ENCODE measurements at regions of chr13 and their contacts with region 1.

Region 1: GRCh38 chr13:30132623-30133553 is 174.5 kb downstream of the KATNAL1 start:
- DNase-seq: peak; percentile 96
- ATAC-seq: peak; percentile 94 to 98 (median 96)
- H3K4me3 ChIP-seq: no peak overlapping the region
- H3K27ac ChIP-seq: peak overlapping the region in 1 of 10 donors; percentile 15
- H3K4me1 ChIP-seq: peaks cover 0 to 20% (median 4%) of the 10 kb centered on the region in 9 donors
- H3K27me3 ChIP-seq: no peaks in the 10 kb centered on the region
- CTCF ChIP-seq: peak; percentile 83 to 97 (median 95)

Region 2: DNA sequence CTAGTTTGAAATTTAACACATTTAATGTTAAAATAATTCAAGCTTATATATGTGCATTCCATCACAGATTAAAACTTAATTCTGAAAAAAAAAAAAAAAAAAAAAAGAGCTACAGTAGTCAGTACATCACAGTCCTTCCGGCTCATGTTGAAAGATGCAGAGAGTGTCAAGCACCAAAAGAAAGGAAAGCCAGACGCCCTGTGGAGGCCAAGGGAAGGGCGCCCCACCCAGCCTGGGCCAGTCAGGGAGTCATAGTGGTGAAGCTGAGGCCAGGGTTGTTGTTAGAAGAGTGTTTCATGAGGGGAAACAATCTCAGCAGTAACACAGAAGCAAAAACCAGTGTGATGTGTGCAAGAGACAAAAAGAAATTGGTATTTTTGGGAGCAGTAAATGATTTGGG is 937.4 kb before region 1 on chr13:
- intact Hi-C with region 1: no loop called
- DNase-seq: no peak
- ATAC-seq: no peak
- H3K4me3 ChIP-seq: no peak overlapping the region
- H3K27ac ChIP-seq: no peak overlapping the region
- H3K4me1 ChIP-seq: no peaks in the 10 kb centered on the region
- H3K27me3 ChIP-seq: no peaks in the 10 kb centered on the region
- CTCF ChIP-seq: peak in 1 of 9 donors; percentile 12

Region 3: DNA sequence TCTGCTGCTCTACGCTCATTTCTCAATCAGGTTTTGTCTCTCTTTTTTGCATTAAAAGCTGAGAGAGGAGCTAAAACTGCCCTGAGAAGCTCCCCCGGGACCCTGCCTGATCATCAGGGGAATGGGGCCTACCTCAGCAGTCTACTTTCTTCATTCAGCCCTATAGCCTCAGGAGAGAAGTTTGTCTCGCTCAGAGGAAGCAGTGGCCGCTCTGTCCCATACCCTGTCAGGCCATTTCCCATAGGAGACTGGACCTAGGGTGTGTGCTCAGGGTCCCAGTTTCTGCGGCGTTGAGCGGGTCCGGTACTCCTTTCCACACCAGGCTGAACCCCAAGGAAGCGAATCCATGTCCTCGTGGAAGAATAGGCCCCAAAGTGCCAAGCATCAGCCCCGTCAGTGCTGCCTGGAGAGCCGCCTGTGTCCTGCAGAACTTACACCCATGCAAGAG is 311.1 kb after region 1 on chr13:
- intact Hi-C with region 1: loop called in 3 of 10 experiments (anchors 5 to 10 kb)
- DNase-seq: no peak
- ATAC-seq: no peak
- H3K4me3 ChIP-seq: no peak overlapping the region
- H3K27ac ChIP-seq: no peak overlapping the region
- H3K4me1 ChIP-seq: peaks cover 0 to 26% (median 16%) of the 10 kb centered on the region in 9 donors
- H3K27me3 ChIP-seq: no peaks in the 10 kb centered on the region
- CTCF ChIP-seq: no peak

Region 4: DNA sequence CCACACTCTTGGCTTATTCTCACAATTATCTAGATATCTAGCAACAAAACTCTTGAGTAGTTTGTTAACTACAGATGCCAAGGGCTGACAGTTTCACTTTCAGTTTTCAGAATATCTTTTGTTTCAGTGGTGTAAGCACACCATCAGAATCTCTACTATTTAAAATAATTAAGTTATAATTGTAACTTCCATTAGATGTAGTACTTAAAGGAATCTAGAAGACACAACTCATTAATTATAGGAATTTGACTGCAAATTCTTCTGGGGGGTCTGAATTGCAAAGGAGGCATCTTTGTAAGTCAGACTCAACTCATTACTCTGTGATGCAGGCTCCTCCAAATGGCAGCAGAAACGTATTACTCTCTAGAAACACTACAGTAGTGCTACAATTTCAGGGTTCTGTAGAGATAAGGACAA is 440.0 kb after region 1 on chr13:
- intact Hi-C with region 1: loop called in 5 of 10 experiments (anchors 5 to 10 kb)
- DNase-seq: peak in 1 of 2 donors; percentile 42
- ATAC-seq: peak in 6 of 8 donors; percentile 75 to 82 (median 77)
- H3K4me3 ChIP-seq: peak overlapping the region in 9 of 10 donors; percentile 25 to 51 (median 39)
- H3K27ac ChIP-seq: peak overlapping the region in 8 of 10 donors; percentile 38 to 80 (median 62)
- H3K4me1 ChIP-seq: peaks cover 0 to 57% (median 25%) of the 10 kb centered on the region in 9 donors
- H3K27me3 ChIP-seq: no peaks in the 10 kb centered on the region
- CTCF ChIP-seq: peak in 6 of 9 donors; percentile 16 to 59 (median 48)

Region 5: DNA sequence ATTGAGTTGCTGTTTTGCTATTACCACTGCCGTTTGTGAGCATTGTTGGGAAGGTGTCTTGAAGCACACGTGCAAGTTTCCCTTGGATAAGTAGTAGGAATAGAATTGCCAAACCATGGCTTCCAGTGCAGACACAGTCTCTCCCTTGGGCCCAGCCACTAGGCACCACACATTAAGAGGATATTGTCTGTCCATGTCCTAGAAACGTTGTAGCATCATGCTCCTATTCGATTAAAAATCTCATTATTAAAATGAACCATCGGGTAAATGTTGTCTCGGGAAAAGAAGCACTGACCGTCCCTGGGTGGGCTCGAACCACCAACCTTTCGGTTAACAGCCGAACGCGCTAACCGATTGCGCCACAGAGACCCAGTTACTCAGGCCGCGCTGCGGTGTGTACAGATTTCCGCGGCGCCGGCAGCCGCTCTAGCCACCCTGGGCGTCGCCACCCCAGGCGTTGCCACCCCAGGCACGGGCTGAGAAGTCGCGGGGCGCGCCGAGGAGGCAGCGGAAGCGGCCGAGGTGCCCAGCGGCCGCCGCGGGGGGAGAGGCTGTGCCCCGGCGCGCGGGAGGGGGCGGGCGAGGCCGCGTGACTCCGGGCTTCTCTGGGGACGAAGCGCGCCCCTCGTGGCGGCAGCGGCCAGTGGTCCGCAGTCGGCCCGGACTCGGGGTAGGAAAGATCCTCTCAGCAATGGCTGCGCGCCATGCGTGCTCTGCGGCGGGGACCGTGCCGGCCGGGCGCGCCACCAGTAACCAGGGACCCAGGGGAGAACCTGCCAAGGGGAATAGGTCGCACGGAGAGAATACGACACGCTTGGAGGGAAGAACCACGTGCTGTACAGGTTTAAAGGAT is 541.0 kb after region 1 on chr13:
- intact Hi-C with region 1: loop called in 1 of 10 experiments (anchors 10 kb)
- DNase-seq: peak; percentile 86 to 90
- ATAC-seq: peak; percentile 93 to 97 (median 96)
- H3K4me3 ChIP-seq: peak overlapping the region in 9 of 10 donors; percentile 33 to 67 (median 59)
- H3K27ac ChIP-seq: peak overlapping the region; percentile 49 to 84 (median 76)
- H3K4me1 ChIP-seq: peaks cover 0 to 11% (median 7%) of the 10 kb centered on the region in 9 donors
- H3K27me3 ChIP-seq: no peaks in the 10 kb centered on the region
- CTCF ChIP-seq: peak; percentile 63 to 93 (median 81)

Region 6: GRCh38 chr13:30865123-30866049 is 732.5 kb after region 1 on chr13:
- intact Hi-C with region 1: loop called in 3 of 10 experiments (anchors 5 to 10 kb)
- DNase-seq: peak; percentile 67 to 70
- ATAC-seq: peak; percentile 78 to 86 (median 82)
- H3K4me3 ChIP-seq: no peak overlapping the region
- H3K27ac ChIP-seq: peak overlapping the region in 8 of 10 donors; percentile 42 to 80 (median 60)
- H3K4me1 ChIP-seq: peaks cover 5 to 33% (median 18%) of the 10 kb centered on the region in 9 donors
- H3K27me3 ChIP-seq: peaks cover 0 to 7% (median 0%) of the 10 kb centered on the region in 7 donors
- CTCF ChIP-seq: peak; percentile 79 to 93 (median 90)

Measured in heart right ventricle (tissue), 16 donors.